ENCODE measurements at regions of chr20 and their contacts with region 1.

Region 1: GRCh38 chr20:43456809-43457639 is 672 bp upstream of the SRSF6 start:
- DNase-seq: peak; percentile 93
- ATAC-seq: peak; percentile 89

Region 2: DNA sequence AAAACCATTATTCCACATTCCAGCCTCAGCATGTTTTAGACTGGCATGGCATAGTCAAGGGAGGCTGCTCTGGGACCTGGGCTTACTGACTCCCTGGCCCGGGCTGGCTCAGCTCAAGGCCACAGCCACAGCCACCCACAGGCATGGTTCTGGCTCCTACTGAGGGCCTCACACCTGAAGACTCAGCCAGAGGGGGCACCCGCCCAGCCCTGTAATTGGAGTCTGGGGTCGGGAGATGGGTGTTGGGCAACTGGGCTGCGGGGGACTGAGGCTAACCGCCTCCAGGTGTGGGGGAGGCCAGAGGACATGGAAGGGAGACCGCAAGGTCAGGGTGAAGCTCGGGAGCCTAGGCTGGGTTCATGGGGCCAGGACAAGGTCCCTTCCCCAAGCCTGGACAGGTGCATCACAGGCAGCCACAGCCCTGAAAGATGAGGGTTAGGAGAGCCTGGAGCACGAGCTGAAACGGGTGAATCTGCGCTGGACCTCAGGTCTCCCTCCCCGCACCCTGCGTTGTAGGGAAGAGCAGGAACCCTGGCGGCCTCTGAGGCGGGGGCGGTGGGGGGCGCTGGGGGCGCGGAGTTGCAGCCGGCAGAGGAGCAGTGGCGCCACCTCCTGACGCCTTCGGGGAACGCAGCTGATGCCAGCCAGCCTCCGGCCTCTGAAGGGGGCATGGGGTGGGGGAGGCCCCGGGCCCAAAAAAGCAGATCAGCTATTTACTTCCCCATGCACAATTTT is 67.0 kb before region 1 on chr20:
- intact Hi-C with region 1: no loop called
- DNase-seq: no peak
- ATAC-seq: no peak

Region 3: DNA sequence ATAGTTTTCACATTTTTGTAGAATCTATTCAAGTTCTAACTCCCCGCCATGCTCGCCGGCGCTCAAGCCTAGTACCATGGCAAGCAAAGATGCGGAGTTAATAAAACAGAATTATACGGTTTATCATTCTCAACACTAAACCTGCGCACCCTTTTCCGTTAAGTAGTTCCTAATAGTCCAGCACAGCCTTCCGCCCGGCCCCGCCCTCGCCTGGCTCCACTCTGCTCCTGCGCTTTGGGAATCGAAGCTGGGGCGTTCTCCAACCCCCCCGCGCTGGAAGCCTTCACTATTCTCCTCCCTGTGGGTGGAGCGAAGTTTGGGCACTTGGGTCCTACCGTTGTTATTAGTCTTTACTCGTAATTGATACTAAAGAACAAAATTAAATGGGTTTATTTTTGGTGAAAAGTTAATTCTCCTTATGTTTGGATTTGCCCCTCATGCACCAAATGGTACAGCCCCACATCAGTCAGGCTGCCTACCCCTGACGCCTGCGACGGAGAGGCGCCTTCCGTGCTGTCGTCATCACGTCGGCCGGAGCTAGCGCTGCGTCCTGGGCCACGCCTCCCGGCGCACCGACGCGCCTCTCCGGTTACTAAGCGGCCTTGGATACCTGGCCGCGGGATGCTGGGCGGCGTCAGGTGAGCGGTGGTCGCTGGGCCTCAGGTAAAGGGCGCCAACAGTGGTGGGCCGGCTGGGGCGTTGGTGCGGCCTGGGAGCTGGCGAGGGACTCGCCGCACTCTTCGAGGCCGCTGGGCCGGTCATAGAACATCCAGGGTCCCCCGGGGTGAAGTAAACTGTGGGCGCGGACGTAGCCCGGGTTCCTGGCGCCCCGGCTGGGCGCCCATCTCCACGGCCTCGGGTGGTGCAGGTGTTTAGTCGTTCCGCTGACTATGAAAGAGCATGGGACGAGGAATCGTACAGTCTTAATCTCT is 133.6 kb after region 1 on chr20 and contains the start of gene IFT52:
- intact Hi-C with region 1: loop called (anchors 10 kb)
- DNase-seq: peak; percentile 95
- ATAC-seq: peak; percentile 100
- total RNA-seq, gene IFT52: 5.5 TPM

Region 4: DNA sequence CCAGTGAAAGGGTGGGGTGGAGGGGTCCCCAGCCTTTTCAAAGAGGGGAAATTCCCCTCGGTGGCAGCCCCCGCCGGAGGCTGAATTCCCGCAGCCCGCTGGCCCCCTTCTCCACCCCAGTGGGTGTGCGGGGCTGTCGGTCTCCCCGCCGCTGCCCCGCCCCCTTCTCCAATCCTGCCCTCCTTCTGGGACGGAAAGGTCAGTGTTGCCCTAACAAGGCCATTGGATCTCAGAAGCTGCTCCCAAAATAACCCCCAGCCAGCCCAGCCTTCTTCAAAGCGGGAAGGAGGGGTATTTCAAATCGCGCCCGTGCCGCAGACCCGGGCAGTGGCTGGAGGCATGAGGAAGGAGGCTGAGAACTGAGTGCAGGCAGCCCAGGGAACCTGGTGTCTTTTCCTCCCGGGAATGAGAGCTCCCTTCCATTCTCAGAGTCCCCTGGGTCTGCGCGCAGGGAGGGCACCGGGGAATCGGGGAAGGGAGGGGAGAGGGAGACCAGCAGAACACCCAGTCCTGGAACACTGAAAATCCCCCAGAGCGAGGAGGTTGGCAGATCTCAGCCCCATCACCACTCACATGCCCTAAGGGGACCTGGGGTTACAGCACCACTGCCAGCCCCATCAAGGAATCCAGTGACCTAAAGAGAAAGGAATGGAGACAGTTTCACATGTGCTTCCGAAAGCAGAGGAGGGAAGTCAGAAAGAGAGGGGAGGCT is 730.2 kb after region 1 on chr20 and contains the start of gene JPH2:
- intact Hi-C with region 1: no loop called
- DNase-seq: peak; percentile 76
- ATAC-seq: peak; percentile 84
- total RNA-seq, gene JPH2: 181 TPM